ENCODE measurements at regions of chr2 and their contacts with region 1.

Region 1: DNA sequence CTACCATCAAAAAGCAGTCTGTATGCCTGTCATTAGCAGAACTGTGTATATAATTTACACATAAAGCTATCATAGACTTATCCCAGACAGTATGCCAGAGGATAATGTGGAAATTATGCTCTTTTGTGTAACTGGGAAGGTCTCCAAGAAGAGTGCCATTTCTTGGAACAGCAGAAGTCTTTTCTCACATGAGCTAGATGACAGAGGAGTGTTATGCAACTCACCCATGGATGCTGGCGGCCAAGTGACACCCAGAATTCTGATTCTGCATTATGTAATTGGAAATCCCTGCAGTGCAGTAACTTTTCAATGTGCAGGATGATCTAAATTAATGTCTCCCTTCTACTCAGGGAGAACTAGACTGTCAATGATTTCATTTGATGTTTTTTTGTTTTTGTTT is 160.0 kb downstream of the UBE2E3 start:
- DNase-seq: peak in 5 of 14 experiments; percentile 12 to 69 (median 58)
- ATAC-seq: peak; percentile 35
- H3K4me3 ChIP-seq: no peak overlapping the region
- H3K4me3 Mint-ChIP-seq: peak overlapping the region; percentile 85
- H3K27ac ChIP-seq: peak overlapping the region; percentile 48 to 81
- H3K27ac Mint-ChIP-seq: peak overlapping the region; percentile 96
- H3K4me1 ChIP-seq: peaks cover 34% of the 10 kb centered on the region
- H3K4me1 Mint-ChIP-seq: peaks cover 80% of the 10 kb centered on the region
- H3K27me3 ChIP-seq: no peaks in the 10 kb centered on the region
- H3K27me3 Mint-ChIP-seq: no peaks in the 10 kb centered on the region
- CTCF ChIP-seq: no peak

Region 2: GRCh38 chr2:180495606-180496005 is 644.8 kb before region 1 on chr2:
- CTCF ChIA-PET with region 1: no interaction called
- POLR2A ChIA-PET with region 1: no interaction called
- intact Hi-C with region 1: no loop called
- DNase-seq: no peak
- ATAC-seq: no peak
- H3K4me3 ChIP-seq: no peak overlapping the region
- H3K4me3 Mint-ChIP-seq: no peak overlapping the region
- H3K27ac ChIP-seq: no peak overlapping the region
- H3K27ac Mint-ChIP-seq: no peak overlapping the region
- H3K4me1 ChIP-seq: no peaks in the 10 kb centered on the region
- H3K4me1 Mint-ChIP-seq: no peaks in the 10 kb centered on the region
- H3K27me3 ChIP-seq: no peaks in the 10 kb centered on the region
- H3K27me3 Mint-ChIP-seq: no peaks in the 10 kb centered on the region
- CTCF ChIP-seq: no peak

Region 3: GRCh38 chr2:181123798-181124231 is 16.6 kb before region 1 on chr2:
- CTCF ChIA-PET with region 1: interaction called, 3 read pairs
- POLR2A ChIA-PET with region 1: interaction called, 39 read pairs
- intact Hi-C with region 1: loop called in 1 of 2 experiments (anchors 1 kb)
- DNase-seq: peak in 13 of 14 experiments; percentile 29 to 94 (median 44)
- ATAC-seq: peak; percentile 95
- H3K4me3 ChIP-seq: peak overlapping the region; percentile 35
- H3K4me3 Mint-ChIP-seq: peak overlapping the region; percentile 65
- H3K27ac ChIP-seq: peak overlapping the region; percentile 87 to 90
- H3K27ac Mint-ChIP-seq: peak overlapping the region; percentile 99
- H3K4me1 ChIP-seq: peaks cover 17% of the 10 kb centered on the region
- H3K4me1 Mint-ChIP-seq: peaks cover 74% of the 10 kb centered on the region
- H3K27me3 ChIP-seq: no peaks in the 10 kb centered on the region
- H3K27me3 Mint-ChIP-seq: no peaks in the 10 kb centered on the region
- CTCF ChIP-seq: no peak

Region 4: DNA sequence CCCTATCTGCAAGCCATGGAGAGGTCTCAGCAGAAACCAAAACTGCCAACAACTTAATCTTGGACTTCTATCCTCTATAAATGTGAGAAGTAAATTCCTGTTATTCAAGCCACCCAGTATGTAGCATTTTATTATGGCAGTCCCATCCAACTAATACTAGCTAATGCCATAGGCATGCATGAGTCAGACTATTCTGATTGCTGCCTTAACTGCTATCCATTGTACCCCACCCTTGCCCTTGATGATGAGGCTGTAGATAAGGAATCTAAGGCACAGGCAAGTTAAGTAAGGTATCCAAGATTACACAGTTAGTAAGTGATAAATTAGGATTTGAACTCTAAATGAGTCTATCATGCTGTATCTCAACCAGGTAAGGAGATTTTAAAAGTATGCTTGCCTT is 63.0 kb after region 1 on chr2:
- CTCF ChIA-PET with region 1: no interaction called
- POLR2A ChIA-PET with region 1: no interaction called
- intact Hi-C with region 1: no loop called
- DNase-seq: no peak
- ATAC-seq: no peak
- H3K4me3 ChIP-seq: no peak overlapping the region
- H3K4me3 Mint-ChIP-seq: no peak overlapping the region
- H3K27ac ChIP-seq: no peak overlapping the region
- H3K27ac Mint-ChIP-seq: no peak overlapping the region
- H3K4me1 ChIP-seq: peaks cover 3% of the 10 kb centered on the region
- H3K4me1 Mint-ChIP-seq: peaks cover 26% of the 10 kb centered on the region
- H3K27me3 ChIP-seq: no peaks in the 10 kb centered on the region
- H3K27me3 Mint-ChIP-seq: no peaks in the 10 kb centered on the region
- CTCF ChIP-seq: no peak

Region 5: DNA sequence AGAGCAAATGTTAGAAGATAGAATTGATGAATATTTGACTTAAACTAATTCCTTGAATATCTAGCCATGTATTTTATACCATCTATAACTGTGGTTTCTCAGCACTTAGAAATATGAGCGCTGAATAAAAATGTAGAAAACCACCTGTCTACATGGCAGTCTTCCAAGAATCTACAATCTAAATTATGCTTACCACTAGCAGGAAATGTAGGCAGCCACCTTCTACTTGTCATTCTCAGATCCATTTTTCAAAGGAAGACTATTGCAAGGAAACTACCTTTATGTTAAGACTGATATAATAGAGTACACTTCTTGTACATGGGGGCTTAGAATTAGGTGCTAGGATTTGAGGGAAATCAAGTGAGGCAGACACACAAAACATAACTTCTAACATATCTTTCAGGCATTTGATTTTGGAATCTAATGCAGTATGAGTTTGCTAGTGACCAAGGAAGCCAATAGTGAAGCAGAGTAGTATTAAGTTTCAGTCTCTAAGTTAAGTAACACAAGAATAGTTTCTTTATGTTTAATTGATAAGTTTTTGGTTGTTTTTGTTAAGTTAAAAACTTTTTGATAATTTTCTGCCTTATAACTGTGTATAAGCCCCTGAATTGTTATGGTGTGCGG is 140.9 kb after region 1 on chr2:
- CTCF ChIA-PET with region 1: no interaction called
- POLR2A ChIA-PET with region 1: interaction called, 3 read pairs
- intact Hi-C with region 1: loop called in 1 of 2 experiments (anchors 5 kb)
- DNase-seq: peak in 3 of 14 experiments; percentile 72 to 79 (median 77)
- ATAC-seq: peak; percentile 91
- H3K4me3 ChIP-seq: no peak overlapping the region
- H3K4me3 Mint-ChIP-seq: peak overlapping the region; percentile 31
- H3K27ac ChIP-seq: peak overlapping the region; percentile 43 to 63
- H3K27ac Mint-ChIP-seq: peak overlapping the region; percentile 78
- H3K4me1 ChIP-seq: peaks cover 5% of the 10 kb centered on the region
- H3K4me1 Mint-ChIP-seq: peaks cover 52% of the 10 kb centered on the region
- H3K27me3 ChIP-seq: no peaks in the 10 kb centered on the region
- H3K27me3 Mint-ChIP-seq: no peaks in the 10 kb centered on the region
- CTCF ChIP-seq: no peak